Activated CD8-positive, alpha-beta T cell treated with anti-CD3 and anti-CD28 coated beads for 36 hours (primary cell): ENCODE measurements at regions of chr12 and their contacts with region 1.

Region 1: GRCh38 chr12:53746592-53747092 is 5.1 kb downstream of the CISTR start:
- DNase-seq: peak; percentile 92
- ATAC-seq: peak; percentile 84
- H3K4me3 Mint-ChIP-seq: no peak overlapping the region
- H3K27ac Mint-ChIP-seq: no peak overlapping the region
- H3K4me1 Mint-ChIP-seq: peaks cover 16% of the 10 kb centered on the region
- H3K27me3 Mint-ChIP-seq: peaks cover 26% of the 10 kb centered on the region
- CTCF ChIP-seq: peak; percentile 99

Region 2: GRCh38 chr12:53675651-53676453 is 70.8 kb before region 1 on chr12 and contains the start of gene ATP5MC2:
- CTCF ChIA-PET with region 1: interaction called, 39 read pairs
- POLR2A ChIA-PET with region 1: interaction called, 8 read pairs
- intact Hi-C with region 1: no loop called
- DNase-seq: peak; percentile 98
- ATAC-seq: peak; percentile 93
- H3K4me3 Mint-ChIP-seq: peak within 1 kb of the TSS; percentile 95
- H3K27ac Mint-ChIP-seq: peak within 1 kb of the TSS; percentile 96
- H3K4me1 Mint-ChIP-seq: peaks cover 35% of the 10 kb centered on the region
- H3K27me3 Mint-ChIP-seq: peaks cover 19% of the 10 kb centered on the region
- CTCF ChIP-seq: peak; percentile 98
- total RNA-seq, gene ATP5MC2: 365 to 378 TPM

Region 3: DNA sequence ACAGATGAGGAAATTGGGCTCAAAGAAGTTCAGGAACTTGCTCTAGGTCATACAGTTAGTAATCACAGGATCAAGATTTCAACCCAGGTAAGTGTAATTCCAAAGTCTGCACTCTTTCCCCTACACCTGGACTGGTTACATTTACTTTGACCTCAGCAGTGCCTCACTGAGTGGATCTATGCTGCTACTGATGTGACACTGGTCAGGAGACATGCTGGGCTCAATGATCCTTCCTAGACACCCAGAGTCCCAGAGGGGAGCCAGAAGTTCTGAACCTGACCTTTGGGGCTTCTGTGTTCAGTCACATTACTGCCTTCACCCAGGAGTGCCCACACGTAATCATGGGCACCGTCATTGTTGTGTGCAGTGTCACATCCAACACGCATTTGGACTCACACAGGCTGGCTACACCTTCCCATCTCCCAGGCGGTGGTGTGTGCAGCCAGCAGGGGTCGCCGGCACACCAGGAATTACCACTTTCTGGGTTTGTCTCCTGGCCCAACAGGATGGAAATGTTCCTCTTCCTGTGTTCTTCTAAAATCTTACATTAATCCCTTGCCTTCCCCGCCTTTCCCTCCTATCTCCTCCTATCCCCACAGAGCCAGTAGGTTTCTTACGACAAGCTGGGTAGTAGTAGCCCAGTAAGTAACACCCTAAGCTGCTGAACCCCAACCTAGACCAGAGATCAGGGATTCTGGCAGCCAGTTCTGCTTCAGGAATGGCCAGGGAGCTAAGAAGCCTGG is 45.0 kb before region 1 on chr12:
- CTCF ChIA-PET with region 1: interaction called, 361 read pairs
- POLR2A ChIA-PET with region 1: interaction called, 4 read pairs
- intact Hi-C with region 1: loop called (anchors 2 kb)
- DNase-seq: peak; percentile 86
- ATAC-seq: peak; percentile 96
- H3K4me3 Mint-ChIP-seq: no peak overlapping the region
- H3K27ac Mint-ChIP-seq: no peak overlapping the region
- H3K4me1 Mint-ChIP-seq: peaks cover 3% of the 10 kb centered on the region
- H3K27me3 Mint-ChIP-seq: peaks cover 71% of the 10 kb centered on the region
- CTCF ChIP-seq: peak; percentile 93

Region 4: GRCh38 chr12:53727310-53728041 is 19.2 kb before region 1 on chr12 and contains the start of gene CALCOCO1:
- CTCF ChIA-PET with region 1: interaction called, 418 read pairs
- POLR2A ChIA-PET with region 1: interaction called, 12 read pairs
- intact Hi-C with region 1: no loop called
- DNase-seq: peak; percentile 99
- ATAC-seq: peak; percentile 97
- H3K4me3 Mint-ChIP-seq: peak within 1 kb of the TSS; percentile 87
- H3K27ac Mint-ChIP-seq: peak within 1 kb of the TSS; percentile 95
- H3K4me1 Mint-ChIP-seq: peaks cover 28% of the 10 kb centered on the region
- H3K27me3 Mint-ChIP-seq: no peaks in the 10 kb centered on the region
- CTCF ChIP-seq: no peak
- total RNA-seq, gene CALCOCO1: 15.5 to 16.2 TPM

Region 5: DNA sequence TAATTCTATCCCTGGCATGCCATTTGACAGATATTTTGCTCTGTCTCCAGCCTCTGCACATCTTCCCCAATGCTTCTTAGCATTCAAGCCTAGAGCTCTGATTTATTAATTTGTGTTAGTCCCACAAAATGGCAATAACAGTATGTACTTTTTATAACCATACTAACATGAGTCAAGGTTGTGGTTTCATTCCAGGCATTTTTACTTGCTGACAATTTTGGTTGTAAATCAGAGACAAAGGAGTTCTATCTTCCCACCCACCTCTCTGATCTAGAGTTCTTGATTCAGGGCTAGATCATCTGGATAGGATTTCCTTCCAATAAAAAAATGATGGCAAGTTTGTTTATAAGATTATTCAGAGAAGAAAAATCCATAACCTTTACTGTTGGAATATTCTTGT is 23.6 kb after region 1 on chr12:
- CTCF ChIA-PET with region 1: interaction called, 19 read pairs
- POLR2A ChIA-PET with region 1: no interaction called
- intact Hi-C with region 1: no loop called
- DNase-seq: no peak
- ATAC-seq: no peak
- H3K4me3 Mint-ChIP-seq: no peak overlapping the region
- H3K27ac Mint-ChIP-seq: no peak overlapping the region
- H3K4me1 Mint-ChIP-seq: no peaks in the 10 kb centered on the region
- H3K27me3 Mint-ChIP-seq: peaks cover 34% of the 10 kb centered on the region
- CTCF ChIP-seq: no peak